Activated CD4-positive, alpha-beta T cell treated with anti-CD3 and anti-CD28 coated beads for 36 hours (primary cell): ENCODE measurements at regions of chrX and their contacts with region 1.

Region 1: GRCh38 chrX:77446029-77446585 is 1.1 kb upstream of the FGF16 start:
- DNase-seq: peak; percentile 55
- ATAC-seq: peak; percentile 33
- H3K4me3 Mint-ChIP-seq: peak overlapping the region; percentile 66
- H3K27ac Mint-ChIP-seq: no peak overlapping the region
- H3K4me1 Mint-ChIP-seq: peaks cover 11% of the 10 kb centered on the region
- H3K27me3 Mint-ChIP-seq: peaks cover 22% of the 10 kb centered on the region

Region 2: DNA sequence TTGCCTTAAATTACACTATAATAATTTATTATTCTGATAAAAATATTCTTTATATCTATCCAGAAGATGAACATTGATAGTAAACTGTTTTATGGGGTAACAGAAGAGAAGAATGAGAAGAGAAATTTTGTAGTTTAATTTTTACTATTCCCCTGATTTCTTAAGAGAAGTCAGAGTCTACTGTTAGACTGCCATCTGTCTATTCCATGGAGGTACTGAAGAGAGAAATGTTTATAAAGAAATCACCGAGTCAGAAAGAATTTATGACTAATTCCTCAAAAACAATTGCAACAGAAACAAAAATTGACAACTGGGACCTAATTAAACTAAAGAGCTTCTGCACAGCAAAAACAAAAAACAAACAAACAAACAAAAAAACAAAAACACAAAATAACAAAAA is 151.0 kb after region 1 on chrX:
- CTCF ChIA-PET with region 1: interaction called, 3 read pairs
- POLR2A ChIA-PET with region 1: no interaction called
- intact Hi-C with region 1: loop called in 1 of 2 experiments (anchors 10 kb)
- DNase-seq: no peak
- ATAC-seq: no peak
- H3K4me3 Mint-ChIP-seq: no peak overlapping the region
- H3K27ac Mint-ChIP-seq: no peak overlapping the region
- H3K4me1 Mint-ChIP-seq: peaks cover 11% of the 10 kb centered on the region
- H3K27me3 Mint-ChIP-seq: no peaks in the 10 kb centered on the region

Region 3: DNA sequence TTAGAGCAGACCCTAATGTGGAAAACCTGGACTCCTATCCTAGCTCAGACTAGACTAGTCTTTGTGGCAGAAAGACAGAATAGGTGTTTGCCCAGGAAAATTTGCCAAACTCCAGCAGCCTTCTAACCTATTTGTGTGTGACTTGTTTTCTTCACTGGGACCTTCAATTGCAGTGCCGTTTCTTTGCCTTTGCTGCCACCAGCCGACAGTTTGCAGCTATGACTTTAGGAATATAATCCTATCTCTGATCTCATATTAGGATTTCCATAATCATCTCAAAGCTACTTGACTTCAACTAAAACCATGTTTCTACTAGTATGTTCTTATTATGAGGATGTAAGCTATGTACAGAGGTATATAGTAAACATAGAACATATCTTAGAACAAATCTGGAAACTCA is 583.6 kb after region 1 on chrX:
- CTCF ChIA-PET with region 1: no interaction called
- POLR2A ChIA-PET with region 1: no interaction called
- intact Hi-C with region 1: loop called in 1 of 2 experiments (anchors 10 kb)
- DNase-seq: peak; percentile 33
- ATAC-seq: no peak
- H3K4me3 Mint-ChIP-seq: no peak overlapping the region
- H3K27ac Mint-ChIP-seq: no peak overlapping the region
- H3K4me1 Mint-ChIP-seq: peaks cover under 1% of the 10 kb centered on the region
- H3K27me3 Mint-ChIP-seq: no peaks in the 10 kb centered on the region

Region 4: DNA sequence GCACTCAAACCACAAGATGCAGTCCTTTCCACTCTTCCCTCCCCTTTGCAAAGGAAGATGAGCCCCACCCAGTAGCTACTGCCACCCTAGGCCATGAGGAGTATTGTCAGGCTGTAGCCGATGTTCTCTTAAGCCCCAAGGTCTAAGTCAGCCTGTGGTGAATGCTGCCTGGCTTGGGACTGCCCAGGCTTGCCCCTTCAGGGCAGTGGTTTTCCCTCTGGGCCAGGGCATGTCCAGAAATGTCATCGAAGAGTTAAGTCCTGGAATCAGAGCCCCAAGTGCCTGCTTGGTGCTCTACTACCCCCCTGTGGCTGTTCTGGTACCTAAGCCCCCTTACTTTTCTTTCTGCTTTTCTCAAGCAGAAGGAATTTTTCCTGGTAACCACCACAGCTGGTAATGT is 646.2 kb after region 1 on chrX:
- CTCF ChIA-PET with region 1: no interaction called
- POLR2A ChIA-PET with region 1: no interaction called
- intact Hi-C with region 1: loop called in 1 of 2 experiments (anchors 5 kb)
- DNase-seq: peak; percentile 29
- ATAC-seq: peak; percentile 81
- H3K4me3 Mint-ChIP-seq: no peak overlapping the region
- H3K27ac Mint-ChIP-seq: no peak overlapping the region
- H3K4me1 Mint-ChIP-seq: peaks cover 3% of the 10 kb centered on the region
- H3K27me3 Mint-ChIP-seq: no peaks in the 10 kb centered on the region